ENCODE measurements at regions of chr15 and their contacts with region 1.

Region 1: GRCh38 chr15:40593588-40594428 is at the start of gene KNL1:
- DNase-seq: peak; percentile 97
- ATAC-seq: peak; percentile 74
- H3K4me3 ChIP-seq: peak within 1 kb of the TSS; percentile 98
- H3K27ac ChIP-seq: peak within 1 kb of the TSS; percentile 85
- H3K4me1 ChIP-seq: peaks cover 17% of the 10 kb centered on the region; the same call in 1 of the 2 replicates
- H3K27me3 ChIP-seq: no peaks in the 10 kb centered on the region
- CTCF ChIP-seq: no peak
- total RNA-seq, gene KNL1: 33.5 and 33.8 TPM in 2 replicates

Region 2: GRCh38 chr15:40538981-40539380 is 54.8 kb before region 1 on chr15:
- CTCF ChIA-PET with region 1: interaction called, 19 read pairs
- POLR2A ChIA-PET with region 1: no interaction called
- intact Hi-C with region 1: no loop called
- DNase-seq: no peak
- ATAC-seq: no peak
- H3K4me3 ChIP-seq: no peak overlapping the region
- H3K27ac ChIP-seq: no peak overlapping the region
- H3K4me1 ChIP-seq: no peaks in the 10 kb centered on the region
- H3K27me3 ChIP-seq: no peaks in the 10 kb centered on the region
- CTCF ChIP-seq: no peak

Region 3: GRCh38 chr15:40564591-40565332 is 29.0 kb before region 1 on chr15 and contains the start of gene CCDC32:
- CTCF ChIA-PET with region 1: interaction called, 23 read pairs
- POLR2A ChIA-PET with region 1: interaction called, 15 read pairs
- intact Hi-C with region 1: no loop called
- DNase-seq: peak; percentile 99
- ATAC-seq: peak; percentile 95
- H3K4me3 ChIP-seq: peak within 1 kb of the TSS; percentile 92
- H3K27ac ChIP-seq: peak within 1 kb of the TSS; percentile 32
- H3K4me1 ChIP-seq: peaks cover 14% of the 10 kb centered on the region; the same call in 1 of the 2 replicates
- H3K27me3 ChIP-seq: no peaks in the 10 kb centered on the region
- CTCF ChIP-seq: no peak
- total RNA-seq, gene CCDC32: 16.1 and 19.9 TPM in 2 replicates

Region 4: GRCh38 chr15:40650479-40650878 is 56.7 kb after region 1 on chr15:
- CTCF ChIA-PET with region 1: interaction called, 13 read pairs
- POLR2A ChIA-PET with region 1: no interaction called
- intact Hi-C with region 1: no loop called
- DNase-seq: no peak
- ATAC-seq: no peak
- H3K4me3 ChIP-seq: no peak overlapping the region
- H3K27ac ChIP-seq: no peak overlapping the region
- H3K4me1 ChIP-seq: no peaks in the 10 kb centered on the region
- H3K27me3 ChIP-seq: no peaks in the 10 kb centered on the region
- CTCF ChIP-seq: no peak

Region 5: DNA sequence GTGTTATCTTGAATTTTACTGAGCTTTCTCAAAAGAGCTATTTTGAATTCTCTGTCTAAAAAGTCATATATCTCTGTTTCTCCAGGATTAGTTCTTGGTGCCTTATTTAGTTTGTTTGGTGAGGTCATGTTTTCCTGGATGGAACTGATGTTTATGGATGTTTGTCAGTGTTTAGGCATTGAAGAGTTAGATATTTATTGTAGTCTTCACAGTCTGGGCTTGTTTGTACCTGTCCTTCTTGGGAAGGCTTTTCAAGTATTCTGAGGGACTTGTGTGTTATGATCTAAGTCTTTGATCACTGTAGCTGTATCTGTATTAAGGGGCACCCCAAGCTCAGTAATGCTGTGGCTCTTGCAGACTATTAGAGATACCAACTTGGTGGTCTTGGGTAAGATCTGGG is 90.6 kb after region 1 on chr15:
- CTCF ChIA-PET with region 1: no interaction called
- POLR2A ChIA-PET with region 1: no interaction called
- intact Hi-C with region 1: loop called (anchors 1 kb)
- DNase-seq: no peak
- ATAC-seq: no peak
- H3K4me3 ChIP-seq: no peak overlapping the region
- H3K27ac ChIP-seq: no peak overlapping the region
- H3K4me1 ChIP-seq: 0 out of 2 replicates have a peak, but pooled peaks cover under 1% of the 10 kb centered on the region
- H3K27me3 ChIP-seq: no peaks in the 10 kb centered on the region
- CTCF ChIP-seq: no peak

Region 6: GRCh38 chr15:40694688-40695468 is 101.1 kb after region 1 on chr15 and contains the start of gene RAD51:
- CTCF ChIA-PET with region 1: interaction called, 4 read pairs
- POLR2A ChIA-PET with region 1: no interaction called
- intact Hi-C with region 1: loop called (anchors 1 kb)
- DNase-seq: peak; percentile 94
- ATAC-seq: peak; percentile 90
- H3K4me3 ChIP-seq: peak within 1 kb of the TSS; percentile 77
- H3K27ac ChIP-seq: peak within 1 kb of the TSS; percentile 90
- H3K4me1 ChIP-seq: peaks cover 10% of the 10 kb centered on the region; the same call in 1 of the 2 replicates
- H3K27me3 ChIP-seq: no peaks in the 10 kb centered on the region
- CTCF ChIP-seq: no peak
- total RNA-seq, gene RAD51: 17.3 and 21.9 TPM in 2 replicates

Region 7: DNA sequence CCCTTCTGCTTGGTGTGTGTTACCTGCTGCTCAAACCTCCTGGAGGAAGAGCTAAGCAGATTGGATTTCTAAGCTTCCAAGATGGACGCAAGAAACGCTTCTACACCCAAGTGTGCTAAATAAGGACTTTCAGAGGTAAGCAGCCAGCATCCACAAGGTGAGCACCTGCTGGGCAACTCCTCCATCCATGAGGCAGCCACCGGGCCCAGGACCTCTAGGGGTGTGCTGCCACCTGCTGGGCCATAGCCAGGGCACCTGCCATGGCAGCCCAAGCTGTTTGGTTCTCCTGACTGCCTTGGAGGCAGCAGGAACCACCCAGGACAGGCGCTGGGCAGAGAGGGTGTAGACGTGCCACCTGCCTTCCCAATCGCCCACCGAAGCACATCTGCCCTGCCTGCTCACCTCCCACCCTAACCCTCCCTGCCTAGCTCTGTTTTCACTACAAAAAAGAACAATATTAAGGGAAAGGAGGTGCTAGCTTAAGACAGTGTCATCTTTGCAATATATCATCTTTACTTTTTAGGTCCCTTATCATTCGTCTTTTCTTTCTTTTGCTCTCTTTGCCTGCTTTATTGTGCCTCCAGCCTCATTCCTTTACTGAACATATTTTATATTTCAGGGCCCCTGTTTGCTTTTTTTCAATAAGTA is 188.9 kb after region 1 on chr15:
- CTCF ChIA-PET with region 1: interaction called, 3 read pairs
- POLR2A ChIA-PET with region 1: no interaction called
- intact Hi-C with region 1: loop called (anchors 5 kb)
- DNase-seq: peak; percentile 90
- ATAC-seq: peak; percentile 90
- H3K4me3 ChIP-seq: no peak overlapping the region
- H3K27ac ChIP-seq: no peak overlapping the region
- H3K4me1 ChIP-seq: peaks cover 28% of the 10 kb centered on the region
- H3K27me3 ChIP-seq: no peaks in the 10 kb centered on the region
- CTCF ChIP-seq: peak; percentile 93